ENCODE measurements at regions of chr1 and their contacts with region 1.

Region 1: GRCh38 chr1:87787551-87787950 is 458.9 kb downstream of the LMO4 start:
- DNase-seq: no peak
- H3K4me3 ChIP-seq: no peak overlapping the region
- H3K27ac ChIP-seq: no peak overlapping the region
- H3K4me1 ChIP-seq: peaks cover 0 to 7% (median 2%) of the 10 kb centered on the region in 4 donors
- H3K27me3 ChIP-seq: no peaks in the 10 kb centered on the region
- CTCF ChIP-seq: no peak
- EP300 ChIP-seq: no peak
- POLR2A ChIP-seq: no peak

Region 2: DNA sequence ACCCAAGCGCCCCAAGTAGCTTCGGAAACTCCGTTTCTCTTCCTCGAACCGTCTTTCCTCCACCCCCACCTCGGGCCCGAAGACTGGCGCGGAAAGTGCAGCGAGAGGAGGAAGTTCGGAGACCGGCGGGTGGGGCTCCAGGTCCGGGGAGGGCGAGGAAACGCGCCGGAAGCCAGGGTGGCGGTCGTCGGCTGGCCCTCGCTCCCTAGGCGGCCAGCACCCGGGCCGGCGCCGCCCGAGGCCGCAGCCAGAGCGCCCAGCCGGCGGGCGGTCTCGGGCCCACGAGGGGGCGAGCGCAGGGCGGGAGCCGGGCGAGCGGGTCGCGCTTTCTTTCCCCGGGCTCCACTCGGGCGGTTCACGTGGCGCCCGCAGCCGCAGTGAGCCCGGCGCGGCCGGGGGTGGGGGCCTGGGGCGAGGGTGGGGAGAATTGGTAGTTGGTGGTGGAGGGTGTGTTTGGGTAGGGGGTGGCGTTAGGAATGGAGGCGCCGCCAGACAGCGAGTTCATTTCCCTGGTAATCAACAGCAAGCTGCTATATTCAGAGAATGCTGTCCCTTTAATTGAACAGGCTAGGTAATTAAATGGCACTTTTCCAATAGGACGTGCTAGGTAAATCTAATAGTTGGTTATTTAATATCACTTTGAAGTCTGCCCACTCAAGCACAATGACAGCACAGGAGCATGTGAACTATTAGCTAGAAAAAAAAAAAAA is 452.2 kb before region 1 on chr1:
- intact Hi-C with region 1: loop called (anchors 10 kb)
- DNase-seq: peak; percentile 81
- H3K4me3 ChIP-seq: peak overlapping the region; percentile 58 to 91 (median 82)
- H3K27ac ChIP-seq: peak overlapping the region; percentile 97 to 99 (median 98)
- H3K4me1 ChIP-seq: peaks cover 0 to 65% (median 49%) of the 10 kb centered on the region in 4 donors
- H3K27me3 ChIP-seq: no peaks in the 10 kb centered on the region
- CTCF ChIP-seq: peak in 1 of 4 experiments; percentile 45
- EP300 ChIP-seq: no peak
- POLR2A ChIP-seq: no peak

Region 3: GRCh38 chr1:87840767-87841166 is 53.2 kb after region 1 on chr1:
- intact Hi-C with region 1: no loop called
- DNase-seq: no peak
- H3K4me3 ChIP-seq: no peak overlapping the region
- H3K27ac ChIP-seq: no peak overlapping the region
- H3K4me1 ChIP-seq: no peaks in the 10 kb centered on the region
- H3K27me3 ChIP-seq: no peaks in the 10 kb centered on the region
- CTCF ChIP-seq: no peak
- EP300 ChIP-seq: no peak
- POLR2A ChIP-seq: no peak

Region 4: DNA sequence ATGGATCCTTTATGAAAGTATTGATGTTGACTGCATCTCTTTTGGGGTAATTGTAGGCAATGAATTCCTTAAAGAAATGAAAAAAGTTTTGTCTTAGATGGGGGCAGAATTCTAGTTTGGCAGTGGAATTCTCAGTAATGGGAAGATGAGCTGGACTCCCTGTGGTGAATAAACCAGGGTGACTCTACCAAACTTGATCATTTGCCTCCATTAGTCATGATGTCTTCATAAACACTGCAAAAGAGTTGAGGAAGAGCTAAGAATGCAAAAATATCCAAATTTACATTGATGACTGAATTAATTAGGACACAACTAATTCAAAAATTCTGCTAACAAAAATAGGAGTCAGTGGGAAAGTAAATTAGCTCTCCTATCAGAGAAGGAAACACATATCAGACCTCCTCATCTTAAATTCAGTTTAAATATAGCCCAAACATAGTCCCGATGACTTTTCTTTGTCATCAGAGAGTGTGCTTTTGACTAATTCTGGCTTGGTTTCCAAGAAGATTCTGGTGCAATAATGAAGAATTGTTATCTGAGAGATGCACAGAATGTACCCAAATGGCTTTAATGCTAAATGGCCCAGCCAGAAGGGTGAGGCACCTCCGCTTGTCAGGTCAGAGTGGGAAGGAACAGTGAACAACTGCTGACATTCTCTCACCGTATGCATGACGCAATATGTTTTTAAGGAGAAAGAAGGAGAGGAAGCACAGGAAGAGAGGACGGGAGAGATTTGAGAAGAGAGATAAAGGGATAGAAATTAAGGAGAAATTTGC is 66.2 kb after region 1 on chr1:
- intact Hi-C with region 1: no loop called
- DNase-seq: no peak
- H3K4me3 ChIP-seq: no peak overlapping the region
- H3K27ac ChIP-seq: no peak overlapping the region
- H3K4me1 ChIP-seq: peaks cover 0 to 1% (median 0%) of the 10 kb centered on the region in 4 donors
- H3K27me3 ChIP-seq: no peaks in the 10 kb centered on the region
- CTCF ChIP-seq: no peak
- EP300 ChIP-seq: no peak
- POLR2A ChIP-seq: no peak